ENCODE measurements at regions of chr2 and their contacts with region 1.

Region 1: DNA sequence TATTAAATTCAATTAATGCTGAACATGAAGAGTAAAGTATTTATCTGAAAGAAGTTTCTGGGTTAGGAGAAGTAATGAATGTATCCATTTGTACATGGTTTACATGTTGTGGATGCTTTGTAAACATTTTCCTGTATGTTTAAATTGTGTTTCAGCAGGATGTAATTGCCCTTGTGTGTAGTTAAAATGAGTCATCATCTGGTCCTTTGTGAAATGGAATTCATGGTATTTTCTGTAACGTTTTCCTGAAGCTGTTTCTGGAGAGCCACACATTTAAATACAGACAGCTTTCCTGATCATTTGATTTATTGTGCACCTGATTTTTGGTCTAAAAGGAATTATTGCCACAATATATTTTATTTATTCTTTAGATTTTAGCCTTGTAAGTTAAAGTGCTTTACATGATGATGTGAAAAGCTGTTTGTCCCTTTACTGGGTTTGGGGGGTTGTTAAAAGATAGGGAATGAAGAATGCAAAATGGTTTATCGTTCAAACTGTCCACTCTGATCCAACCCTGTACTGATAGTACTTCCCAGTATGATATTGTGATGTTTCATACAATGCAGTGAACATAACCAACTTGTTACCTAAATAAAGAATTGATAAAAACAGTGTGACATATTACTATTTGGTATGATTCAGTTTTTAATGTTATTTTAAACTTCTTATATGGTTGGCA is 41.7 kb upstream of the SLC3A1 start:
- DNase-seq: no peak
- ATAC-seq: no peak
- H3K4me3 ChIP-seq: no peak overlapping the region
- H3K4me3 Mint-ChIP-seq: no peak overlapping the region
- H3K27ac ChIP-seq: no peak overlapping the region
- H3K27ac Mint-ChIP-seq: no peak overlapping the region
- H3K4me1 ChIP-seq: peaks cover 16 to 18% of the 10 kb centered on the region in 2 donors
- H3K4me1 Mint-ChIP-seq: peaks cover 24% of the 10 kb centered on the region
- H3K27me3 ChIP-seq: no peaks in the 10 kb centered on the region
- H3K27me3 Mint-ChIP-seq: no peaks in the 10 kb centered on the region
- CTCF ChIP-seq: no peak

Region 2: GRCh38 chr2:44397447-44398175 is 164.0 kb after region 1 on chr2:
- CTCF ChIA-PET with region 1: no interaction called
- POLR2A ChIA-PET with region 1: interaction called, 12 read pairs
- intact Hi-C with region 1: no loop called
- DNase-seq: no peak
- ATAC-seq: no peak
- H3K4me3 ChIP-seq: no peak overlapping the region
- H3K4me3 Mint-ChIP-seq: no peak overlapping the region
- H3K27ac ChIP-seq: no peak overlapping the region
- H3K27ac Mint-ChIP-seq: no peak overlapping the region
- H3K4me1 ChIP-seq: no peaks in the 10 kb centered on the region
- H3K4me1 Mint-ChIP-seq: no peaks in the 10 kb centered on the region
- H3K27me3 ChIP-seq: no peaks in the 10 kb centered on the region
- H3K27me3 Mint-ChIP-seq: no peaks in the 10 kb centered on the region
- CTCF ChIP-seq: no peak

Measured in B cell (primary cell).